ENCODE measurements at regions of chr12 and their contacts with region 1.

Region 1: GRCh38 chr12:122051231-122051876 is 27.2 kb upstream of the MLXIP start:
- DNase-seq: no peak
- H3K4me3 ChIP-seq: no peak overlapping the region
- H3K4me3 Mint-ChIP-seq: no peak overlapping the region
- H3K27ac Mint-ChIP-seq: no peak overlapping the region
- H3K4me1 ChIP-seq: peaks cover 12% of the 10 kb centered on the region
- H3K4me1 Mint-ChIP-seq: peaks cover 6% of the 10 kb centered on the region
- H3K27me3 ChIP-seq: no peaks in the 10 kb centered on the region
- H3K27me3 Mint-ChIP-seq: no peaks in the 10 kb centered on the region
- CTCF ChIP-seq: no peak

Region 2: GRCh38 chr12:122123051-122123760 is 71.9 kb after region 1 on chr12:
- CTCF ChIA-PET with region 1: interaction called, 16 read pairs
- POLR2A ChIA-PET with region 1: no interaction called
- intact Hi-C with region 1: loop called (anchors 1 kb)
- DNase-seq: peak; percentile 62 to 81
- H3K4me3 ChIP-seq: no peak overlapping the region
- H3K4me3 Mint-ChIP-seq: no peak overlapping the region
- H3K27ac Mint-ChIP-seq: no peak overlapping the region
- H3K4me1 ChIP-seq: peaks cover 7% of the 10 kb centered on the region; the same call in 1 of the 2 replicates
- H3K4me1 Mint-ChIP-seq: peaks cover under 1% of the 10 kb centered on the region
- H3K27me3 ChIP-seq: no peaks in the 10 kb centered on the region
- H3K27me3 Mint-ChIP-seq: no peaks in the 10 kb centered on the region
- CTCF ChIP-seq: peak; percentile 59 to 74

Measured in Caco-2 (cell line).